A673 (cell line): ENCODE measurements at regions of chr18 and their contacts with region 1.

Region 1: DNA sequence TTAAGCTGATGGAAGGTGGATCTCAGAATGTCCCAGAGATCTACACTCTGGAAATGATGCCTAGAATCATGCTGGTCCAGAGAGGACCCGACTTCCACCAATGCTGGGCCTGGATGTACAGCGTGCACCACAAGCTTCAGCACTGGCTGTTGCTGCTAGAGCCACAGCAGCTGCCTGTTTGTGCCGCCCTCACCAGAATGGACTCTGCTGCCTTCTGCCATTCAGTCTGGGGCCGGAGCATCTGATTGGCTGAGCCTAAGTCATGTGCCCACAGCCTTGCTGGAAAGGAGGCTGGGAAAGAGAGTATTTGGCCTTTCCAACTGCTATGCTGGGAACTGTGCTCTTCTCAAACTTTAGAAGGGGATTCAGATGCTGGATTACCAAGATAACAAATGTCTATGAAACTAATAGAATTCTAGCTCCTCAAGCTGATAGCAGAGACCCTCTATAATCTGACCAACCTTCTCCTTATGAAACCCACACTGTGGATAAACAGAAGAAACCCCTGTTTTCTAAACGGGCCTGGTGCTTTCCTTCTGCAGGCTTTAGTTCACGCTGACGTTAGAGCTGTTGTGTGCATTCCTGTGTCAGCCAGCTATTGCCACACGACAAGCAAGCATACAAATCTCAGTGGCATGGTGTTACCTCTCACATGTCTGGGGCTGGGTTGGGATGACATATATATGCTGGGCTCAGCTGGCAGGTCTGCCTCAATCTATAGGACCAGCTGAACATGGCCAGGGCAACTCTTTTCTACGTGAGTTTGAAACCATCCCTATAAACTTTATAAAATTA is 4.1 kb upstream of the LOXHD1 start:
- DNase-seq: peak; percentile 49
- H3K4me3 ChIP-seq: no peak overlapping the region
- H3K27ac ChIP-seq: no peak overlapping the region
- H3K4me1 ChIP-seq: no peaks in the 10 kb centered on the region
- H3K27me3 ChIP-seq: no peaks in the 10 kb centered on the region
- CTCF ChIP-seq: no peak

Region 2: GRCh38 chr18:46148810-46149209 is 512.3 kb before region 1 on chr18:
- CTCF ChIA-PET with region 1: interaction called, 19 read pairs
- POLR2A ChIA-PET with region 1: no interaction called
- intact Hi-C with region 1: loop called (anchors 1 kb)
- DNase-seq: peak; percentile 73
- H3K4me3 ChIP-seq: no peak overlapping the region
- H3K27ac ChIP-seq: no peak overlapping the region
- H3K4me1 ChIP-seq: no peaks in the 10 kb centered on the region
- H3K27me3 ChIP-seq: no peaks in the 10 kb centered on the region
- CTCF ChIP-seq: peak; percentile 74

Region 3: DNA sequence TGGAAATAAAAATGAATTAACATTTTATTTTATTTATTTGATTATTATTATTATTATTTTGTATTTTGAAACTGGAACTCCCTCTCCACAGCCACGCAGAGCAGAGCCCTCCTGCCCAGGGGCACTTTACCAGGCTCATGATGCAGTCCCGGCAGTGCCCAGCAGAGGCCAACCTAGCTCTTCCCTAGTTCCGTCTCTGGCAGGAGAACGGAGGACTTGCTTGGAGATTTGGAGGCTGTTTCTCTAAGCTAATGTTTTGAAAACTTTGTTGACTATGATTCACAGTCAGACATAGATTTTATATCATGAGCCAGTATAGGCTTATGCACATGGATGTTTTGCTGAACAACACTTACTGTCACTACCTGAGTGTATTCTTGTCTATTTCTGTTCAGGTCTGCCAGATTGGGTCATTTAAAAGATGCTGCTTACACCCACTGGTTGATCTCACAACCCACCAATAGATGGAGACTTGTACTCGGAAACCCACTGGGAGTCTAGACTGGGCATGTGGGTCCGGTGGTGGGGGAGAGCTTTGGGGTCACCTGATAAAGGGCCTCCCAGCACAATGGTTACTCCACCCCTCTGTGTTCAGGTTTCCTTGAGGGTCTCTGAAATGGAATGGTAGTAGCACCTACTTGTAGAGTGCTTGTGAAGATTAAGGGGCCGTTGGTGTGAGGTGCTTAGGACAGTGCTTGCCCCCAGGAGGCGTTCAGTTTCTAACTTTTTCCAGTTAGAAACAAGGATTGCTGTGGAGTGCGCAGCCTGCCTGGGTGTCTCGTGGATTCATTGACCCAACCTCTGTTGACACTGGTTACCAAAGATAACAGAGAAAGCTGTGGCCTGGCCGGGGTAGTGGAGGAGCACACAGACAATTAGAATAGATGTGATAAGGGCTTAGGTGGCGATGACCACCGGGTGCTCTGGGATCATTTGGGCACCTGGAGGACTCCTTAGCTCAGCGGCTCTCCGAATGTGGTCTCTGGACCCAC is 379.7 kb before region 1 on chr18:
- CTCF ChIA-PET with region 1: interaction called, 35 read pairs
- POLR2A ChIA-PET with region 1: no interaction called
- intact Hi-C with region 1: loop called (anchors 1 kb)
- DNase-seq: peak; percentile 83
- H3K4me3 ChIP-seq: no peak overlapping the region
- H3K27ac ChIP-seq: no peak overlapping the region
- H3K4me1 ChIP-seq: peaks cover 28% of the 10 kb centered on the region
- H3K27me3 ChIP-seq: no peaks in the 10 kb centered on the region
- CTCF ChIP-seq: peak; percentile 92

Region 4: GRCh38 chr18:46555724-46556123 is 105.4 kb before region 1 on chr18:
- CTCF ChIA-PET with region 1: interaction called, 16 read pairs
- POLR2A ChIA-PET with region 1: no interaction called
- intact Hi-C with region 1: no loop called
- DNase-seq: peak; percentile 41
- H3K4me3 ChIP-seq: no peak overlapping the region
- H3K27ac ChIP-seq: no peak overlapping the region
- H3K4me1 ChIP-seq: no peaks in the 10 kb centered on the region
- H3K27me3 ChIP-seq: no peaks in the 10 kb centered on the region
- CTCF ChIP-seq: peak; percentile 56